Endothelial cell of umbilical vein (primary cell): ENCODE measurements at regions of chr1 and their contacts with region 1.

Region 1: DNA sequence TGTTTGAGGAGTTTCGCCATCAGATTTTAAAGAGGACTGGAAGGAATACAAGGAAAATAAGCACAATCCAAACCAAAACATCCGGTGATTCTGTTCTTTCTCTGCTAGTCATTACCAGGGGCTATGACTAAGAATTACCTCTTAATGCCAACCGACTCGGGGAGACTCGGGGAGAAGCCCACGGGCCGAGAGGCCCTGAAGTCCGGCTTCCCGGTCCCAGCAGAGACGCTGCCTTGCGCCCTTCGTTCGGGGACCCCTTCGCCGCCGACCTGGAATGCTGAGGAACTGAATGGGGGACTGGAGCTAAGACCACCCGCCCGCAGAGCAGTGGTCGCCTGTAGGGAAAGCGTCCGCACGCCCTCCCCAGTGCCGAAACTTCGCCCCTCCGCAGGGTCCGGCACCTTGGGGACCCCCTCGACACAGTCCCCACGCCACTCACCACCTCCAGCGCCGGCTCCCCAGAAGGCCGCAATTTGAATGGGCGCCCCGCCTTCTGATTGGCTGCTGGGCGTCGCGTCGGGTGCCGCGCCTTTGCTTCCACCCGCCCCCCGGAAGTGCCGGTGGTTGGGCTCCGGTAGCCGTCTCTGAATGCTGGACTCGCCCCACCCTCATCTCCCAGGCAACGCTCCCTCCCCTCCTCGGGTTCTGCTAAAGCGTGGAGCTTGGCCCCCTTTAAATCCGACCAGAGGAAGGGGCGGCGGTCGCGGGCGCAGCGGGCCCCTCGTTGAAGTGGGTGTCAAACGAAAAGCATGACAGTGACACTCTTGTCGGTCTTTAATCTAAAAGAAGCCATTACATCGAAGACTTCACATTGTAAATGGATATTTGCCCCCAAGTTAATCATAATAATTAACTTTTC is at the start of gene KIF14:
- DNase-seq: peak; percentile 89
- H3K4me3 ChIP-seq: peak within 1 kb of the TSS; percentile 58 to 94 (median 81)
- H3K27ac ChIP-seq: peak within 1 kb of the TSS; percentile 95
- H3K4me1 ChIP-seq: peaks cover 16% of the 10 kb centered on the region
- H3K27me3 ChIP-seq: no peaks in the 10 kb centered on the region
- CTCF ChIP-seq: no peak
- POLR2A ChIP-seq: peak; percentile 51
- total RNA-seq, gene KIF14: 12.6 and 13.8 TPM in 2 replicates

Region 2: GRCh38 chr1:200558866-200559459 is 61.5 kb before region 1 on chr1:
- CTCF ChIA-PET with region 1: interaction called, 54 read pairs
- POLR2A ChIA-PET with region 1: no interaction called
- dilution Hi-C with region 1: no loop called
- intact Hi-C with region 1: no loop called
- DNase-seq: peak; percentile 84
- H3K4me3 ChIP-seq: no peak overlapping the region
- H3K27ac ChIP-seq: no peak overlapping the region
- H3K4me1 ChIP-seq: no peaks in the 10 kb centered on the region
- H3K27me3 ChIP-seq: no peaks in the 10 kb centered on the region
- CTCF ChIP-seq: peak; percentile 40 to 54
- POLR2A ChIP-seq: no peak

Region 3: DNA sequence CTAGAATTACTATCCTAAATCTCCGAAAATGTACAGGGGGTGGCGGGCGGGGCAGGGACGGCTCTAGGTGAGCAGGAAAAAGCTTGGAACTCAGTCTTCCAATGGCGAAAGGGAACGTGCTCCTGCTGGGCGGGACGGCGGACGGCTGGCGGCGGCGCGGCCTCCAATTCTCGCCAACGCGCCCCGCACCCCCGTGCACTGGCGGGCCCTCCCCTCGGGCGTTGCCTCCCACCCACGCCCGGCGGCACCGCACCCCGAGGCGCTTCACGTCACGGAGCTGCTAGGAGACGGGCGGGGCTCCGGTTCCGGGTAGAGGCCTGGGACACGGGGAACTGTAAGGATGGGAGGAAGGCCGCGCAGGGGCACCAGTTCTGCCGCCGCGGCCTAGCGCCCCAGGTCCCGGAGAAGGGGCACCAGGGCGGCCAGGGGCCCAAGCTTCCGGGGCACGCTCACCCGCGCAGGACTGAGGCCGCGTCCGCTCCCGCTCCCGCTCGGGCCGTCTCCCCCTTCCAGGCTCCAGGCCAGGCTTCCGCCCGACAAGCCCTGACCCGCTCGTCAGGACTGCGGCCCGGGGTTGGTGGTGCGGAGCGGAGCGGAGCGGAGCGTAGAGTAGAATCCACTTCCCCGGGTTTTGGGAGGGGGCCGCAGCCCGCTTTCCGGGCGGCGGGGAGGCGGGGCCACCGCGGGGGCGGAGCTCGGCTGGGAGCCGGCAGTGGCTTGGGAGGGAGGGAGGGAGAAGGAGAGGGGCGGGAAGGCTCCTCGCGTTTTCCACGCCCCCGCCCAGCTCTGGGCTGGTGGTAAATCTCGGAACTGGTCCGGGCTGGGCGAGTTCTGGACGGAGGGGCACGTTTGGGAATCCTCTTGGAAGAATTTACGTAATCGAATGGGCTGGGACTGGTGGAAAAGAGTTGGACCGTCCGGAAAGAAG is 49.1 kb after region 1 on chr1 and contains the start of gene DDX59:
- CTCF ChIA-PET with region 1: interaction called, 40 read pairs
- POLR2A ChIA-PET with region 1: interaction called, 7 read pairs
- dilution Hi-C with region 1: no loop called
- intact Hi-C with region 1: loop called (anchors 1 kb)
- DNase-seq: peak; percentile 98
- H3K4me3 ChIP-seq: peak within 1 kb of the TSS; percentile 81 to 99 (median 88)
- H3K27ac ChIP-seq: peak within 1 kb of the TSS; percentile 97
- H3K4me1 ChIP-seq: peaks cover 29% of the 10 kb centered on the region
- H3K27me3 ChIP-seq: no peaks in the 10 kb centered on the region
- CTCF ChIP-seq: no peak
- POLR2A ChIP-seq: no peak
- total RNA-seq, gene DDX59: 17.6 and 17.7 TPM in 2 replicates

Region 4: DNA sequence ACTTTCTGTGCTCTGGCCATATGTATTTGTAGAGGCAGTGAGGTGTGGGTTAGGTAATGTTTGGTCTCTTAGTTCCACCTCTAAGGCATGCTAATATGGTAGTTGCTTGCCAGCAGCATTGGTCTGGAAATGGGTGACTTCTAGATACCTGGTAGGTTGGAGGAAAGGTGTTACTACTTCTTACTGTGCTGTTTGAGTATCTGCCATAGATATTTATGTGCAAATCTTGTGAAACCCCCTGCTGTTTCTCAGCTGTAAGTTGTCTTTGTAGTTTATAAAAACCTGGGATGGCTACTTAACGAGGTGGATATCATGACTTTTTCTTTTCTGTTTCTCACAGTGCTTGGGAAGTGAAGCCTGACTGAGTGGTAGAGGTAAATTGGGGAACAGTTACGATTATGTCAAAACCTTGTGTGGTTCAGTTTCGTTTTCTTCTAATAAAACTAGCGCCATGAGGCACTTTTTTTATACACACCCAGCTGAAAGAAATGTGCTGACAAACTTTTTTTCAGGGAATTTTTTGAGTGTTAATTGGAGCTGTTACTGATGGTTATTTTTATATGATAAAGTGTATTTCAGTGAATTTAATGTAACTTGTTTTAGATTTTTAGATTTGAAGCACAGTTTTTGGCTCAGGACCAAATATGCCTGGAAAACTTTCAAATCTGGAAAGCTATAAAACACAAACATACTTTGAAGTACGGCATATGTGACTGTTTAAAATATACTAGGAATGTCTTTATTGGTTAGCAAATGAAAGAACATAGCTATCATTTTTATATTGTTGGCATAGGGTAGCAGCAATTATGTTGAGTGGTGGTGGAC is 160.3 kb after region 1 on chr1:
- CTCF ChIA-PET with region 1: interaction called, 38 read pairs
- POLR2A ChIA-PET with region 1: no interaction called
- dilution Hi-C with region 1: loop called (anchors 25 kb)
- intact Hi-C with region 1: no loop called
- DNase-seq: peak; percentile 59
- H3K4me3 ChIP-seq: peak overlapping the region in 1 of 3 experiments; percentile 42
- H3K27ac ChIP-seq: no peak overlapping the region
- H3K4me1 ChIP-seq: peaks cover 17% of the 10 kb centered on the region
- H3K27me3 ChIP-seq: no peaks in the 10 kb centered on the region
- CTCF ChIP-seq: no peak
- POLR2A ChIP-seq: no peak

Region 5: DNA sequence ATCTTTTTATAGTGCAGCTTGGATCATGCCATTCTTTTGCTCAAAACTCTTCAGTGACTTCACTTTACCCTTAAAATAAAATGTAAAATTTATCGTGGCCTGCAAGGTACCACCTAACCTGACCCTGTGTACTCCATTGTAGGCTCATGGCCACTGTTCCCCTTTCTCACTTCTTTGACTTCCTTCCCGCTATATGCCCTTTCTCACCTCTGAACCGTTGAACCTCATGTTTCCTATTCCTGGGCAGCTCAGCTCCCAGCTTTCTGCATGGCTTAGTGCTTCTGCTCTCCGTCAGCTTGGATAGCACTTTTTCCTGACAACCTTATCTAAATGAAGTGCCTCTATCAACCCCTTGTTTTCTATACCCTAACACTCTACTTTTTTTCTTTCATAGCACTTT is 191.2 kb after region 1 on chr1:
- CTCF ChIA-PET with region 1: interaction called, 67 read pairs
- POLR2A ChIA-PET with region 1: no interaction called
- dilution Hi-C with region 1: no loop called
- intact Hi-C with region 1: no loop called
- DNase-seq: no peak
- H3K4me3 ChIP-seq: no peak overlapping the region
- H3K27ac ChIP-seq: no peak overlapping the region
- H3K4me1 ChIP-seq: no peaks in the 10 kb centered on the region
- H3K27me3 ChIP-seq: no peaks in the 10 kb centered on the region
- CTCF ChIP-seq: no peak
- POLR2A ChIP-seq: no peak

Region 6: GRCh38 chr1:201023517-201023902 is 403.0 kb after region 1 on chr1 and contains the start of gene KIF21B:
- CTCF ChIA-PET with region 1: interaction called, 3 read pairs
- POLR2A ChIA-PET with region 1: no interaction called
- dilution Hi-C with region 1: no loop called
- intact Hi-C with region 1: loop called (anchors 5 kb)
- DNase-seq: peak; percentile 75
- H3K4me3 ChIP-seq: peak within 1 kb of the TSS; percentile 11 to 49 (median 13)
- H3K27ac ChIP-seq: no peak within 1 kb of the TSS
- H3K4me1 ChIP-seq: peaks cover 37% of the 10 kb centered on the region
- H3K27me3 ChIP-seq: no peaks in the 10 kb centered on the region
- CTCF ChIP-seq: no peak
- POLR2A ChIP-seq: no peak
- total RNA-seq, gene KIF21B: 4.4 and 4.7 TPM in 2 replicates

Region 7: DNA sequence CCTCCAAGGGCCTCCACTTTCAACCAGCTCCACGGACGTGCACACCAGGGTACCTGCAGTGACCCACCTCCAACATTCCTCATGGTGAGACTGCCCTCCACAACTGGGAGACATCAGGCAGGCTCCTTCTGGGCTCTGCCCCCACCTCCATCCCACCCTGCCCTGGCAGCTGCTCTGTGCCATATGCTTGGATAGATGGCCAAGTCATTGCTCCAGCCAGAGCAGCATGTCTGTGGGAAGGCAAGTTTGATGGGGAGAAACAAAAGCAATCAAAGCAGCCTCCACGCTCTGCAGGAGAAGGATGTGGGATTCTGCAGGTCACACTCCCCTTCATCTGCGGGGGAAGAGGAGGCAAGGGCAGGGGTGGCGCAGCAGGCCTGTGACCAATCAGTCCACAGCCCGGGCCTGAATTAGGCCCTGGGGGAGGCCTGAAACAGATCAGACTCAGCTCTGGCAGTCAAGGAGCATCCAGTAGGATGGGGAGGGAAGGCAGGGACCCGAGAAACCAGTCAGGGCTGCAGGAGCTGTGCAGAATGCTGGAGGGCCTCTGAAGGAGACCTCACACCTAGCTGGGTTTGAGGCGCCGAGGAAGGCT is 744.1 kb after region 1 on chr1:
- CTCF ChIA-PET with region 1: no interaction called
- POLR2A ChIA-PET with region 1: no interaction called
- dilution Hi-C with region 1: no loop called
- intact Hi-C with region 1: no loop called
- DNase-seq: no peak
- H3K4me3 ChIP-seq: no peak overlapping the region
- H3K27ac ChIP-seq: no peak overlapping the region
- H3K4me1 ChIP-seq: no peaks in the 10 kb centered on the region
- H3K27me3 ChIP-seq: peaks cover 0 to 3% of the 10 kb centered on the region in 2 experiments
- CTCF ChIP-seq: no peak
- POLR2A ChIP-seq: no peak